ENCODE measurements at regions of chr3 and their contacts with region 1.

Region 1: GRCh38 chr3:186705882-186706780 is 11.0 kb upstream of the KNG1 start:
- DNase-seq: no peak
- ATAC-seq: no peak

Region 2: GRCh38 chr3:186298876-186299275 is 407.3 kb before region 1 on chr3:
- intact Hi-C with region 1: no loop called
- DNase-seq: no peak
- ATAC-seq: peak in 1 of 2 donors; percentile 62

Region 3: GRCh38 chr3:186425788-186426730 is 280.1 kb before region 1 on chr3:
- intact Hi-C with region 1: no loop called
- DNase-seq: no peak
- ATAC-seq: peak in 1 of 2 donors; percentile 39

Region 4: DNA sequence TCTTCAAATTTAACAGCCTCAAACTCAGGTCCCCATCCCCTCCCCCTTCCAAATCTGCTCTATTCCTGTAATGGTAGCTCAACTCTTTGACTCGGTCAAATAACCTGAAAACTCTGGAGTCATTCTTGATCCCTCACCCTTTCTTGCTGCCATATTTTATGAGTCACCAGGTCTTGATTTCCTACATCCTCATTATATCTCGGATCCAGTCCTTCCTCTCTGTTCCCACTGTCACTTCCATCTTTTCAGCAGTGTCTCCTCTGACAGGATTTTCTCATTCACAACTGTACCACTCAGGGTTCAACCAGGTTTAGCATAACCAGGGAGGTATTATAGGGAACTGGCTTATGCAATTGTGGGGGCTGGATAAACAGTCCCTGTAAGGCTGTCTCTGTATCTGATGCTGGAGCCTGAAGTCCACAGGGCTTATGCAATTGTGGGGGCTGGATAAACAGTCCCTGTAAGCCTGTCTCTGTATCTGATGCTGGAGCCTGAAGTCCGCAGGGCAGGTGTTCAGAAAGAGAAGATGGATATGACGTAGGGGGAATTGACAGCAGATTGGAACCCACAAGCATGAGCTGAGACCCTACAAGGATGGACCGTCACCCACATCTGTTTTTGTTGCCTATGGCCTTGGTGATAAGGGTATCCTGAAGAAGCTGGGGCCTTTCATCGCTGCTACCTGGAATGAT is 75.0 kb before region 1 on chr3:
- intact Hi-C with region 1: no loop called
- DNase-seq: no peak
- ATAC-seq: no peak

Region 5: GRCh38 chr3:186759231-186759930 is 53.2 kb after region 1 on chr3:
- intact Hi-C with region 1: loop called in 1 of 2 experiments (anchors 10 kb)
- DNase-seq: no peak
- ATAC-seq: no peak

Measured in left cardiac atrium (tissue), 4 donors.